Adrenal gland (tissue), 19 donors: ENCODE measurements at regions of chr7 and their contacts with region 1.

Region 1: GRCh38 chr7:134432296-134433152 is 26.4 kb downstream of the AKR1B1 start:
- DNase-seq: peak; percentile 83 to 94 (median 92)
- H3K4me3 ChIP-seq: peak overlapping the region in 2 of 4 donors; percentile 20 to 33
- H3K27ac ChIP-seq: peak overlapping the region; percentile 55 to 93 (median 79)
- H3K4me1 ChIP-seq: peaks cover 14% of the 10 kb centered on the region in 2 donors
- H3K27me3 ChIP-seq: no peaks in the 10 kb centered on the region
- CTCF ChIP-seq: peak; percentile 69 to 99 (median 92)
- POLR2A ChIP-seq: peak in 1 of 2 donors; percentile 71

Region 2: GRCh38 chr7:134514663-134515062 is 82.1 kb after region 1 on chr7:
- intact Hi-C with region 1: loop called (anchors 2 kb)
- DNase-seq: peak in 5 of 7 donors; percentile 32 to 47 (median 43)
- H3K4me3 ChIP-seq: no peak overlapping the region
- H3K27ac ChIP-seq: no peak overlapping the region
- H3K4me1 ChIP-seq: peaks cover 0 to 4% of the 10 kb centered on the region in 2 donors
- H3K27me3 ChIP-seq: no peaks in the 10 kb centered on the region
- CTCF ChIP-seq: peak; percentile 79 to 95 (median 88)
- POLR2A ChIP-seq: no peak

Region 3: GRCh38 chr7:134605973-134606923 is 173.7 kb after region 1 on chr7:
- intact Hi-C with region 1: loop called in 1 of 2 experiments (anchors 2 kb)
- DNase-seq: peak; percentile 60 to 88 (median 72)
- H3K4me3 ChIP-seq: peak overlapping the region in 1 of 4 donors; percentile 33
- H3K27ac ChIP-seq: peak overlapping the region in 3 of 5 donors; percentile 40 to 59 (median 41)
- H3K4me1 ChIP-seq: peaks cover 0 to 15% of the 10 kb centered on the region in 2 donors
- H3K27me3 ChIP-seq: no peaks in the 10 kb centered on the region
- CTCF ChIP-seq: peak; percentile 86 to 96 (median 92)
- POLR2A ChIP-seq: no peak